ENCODE measurements at regions of chr19 and their contacts with region 1.

Region 1: GRCh38 chr19:49391581-49392399 is 3.7 kb downstream of the KASH5 start:
- DNase-seq: peak; percentile 89 to 93
- ATAC-seq: peak; percentile 83 to 94
- H3K4me3 ChIP-seq: no peak overlapping the region
- H3K27ac ChIP-seq: no peak overlapping the region
- H3K4me1 ChIP-seq: 0 out of 3 replicates have a peak, but pooled peaks cover 3% of the 10 kb centered on the region
- CTCF ChIP-seq: peak; percentile 98
- EP300 ChIP-seq: no peak
- POLR2A ChIP-seq: no peak
- RAD21 ChIP-seq: peak; percentile 97 to 99

Region 2: GRCh38 chr19:49294401-49294800 is 97.4 kb before region 1 on chr19:
- CTCF ChIA-PET with region 1: no interaction called
- POLR2A ChIA-PET with region 1: no interaction called
- DNase-seq: no peak
- ATAC-seq: no peak
- H3K4me3 ChIP-seq: no peak overlapping the region
- H3K27ac ChIP-seq: no peak overlapping the region
- H3K4me1 ChIP-seq: no peaks in the 10 kb centered on the region
- CTCF ChIP-seq: no peak
- EP300 ChIP-seq: no peak
- POLR2A ChIP-seq: no peak
- RAD21 ChIP-seq: no peak

Region 3: DNA sequence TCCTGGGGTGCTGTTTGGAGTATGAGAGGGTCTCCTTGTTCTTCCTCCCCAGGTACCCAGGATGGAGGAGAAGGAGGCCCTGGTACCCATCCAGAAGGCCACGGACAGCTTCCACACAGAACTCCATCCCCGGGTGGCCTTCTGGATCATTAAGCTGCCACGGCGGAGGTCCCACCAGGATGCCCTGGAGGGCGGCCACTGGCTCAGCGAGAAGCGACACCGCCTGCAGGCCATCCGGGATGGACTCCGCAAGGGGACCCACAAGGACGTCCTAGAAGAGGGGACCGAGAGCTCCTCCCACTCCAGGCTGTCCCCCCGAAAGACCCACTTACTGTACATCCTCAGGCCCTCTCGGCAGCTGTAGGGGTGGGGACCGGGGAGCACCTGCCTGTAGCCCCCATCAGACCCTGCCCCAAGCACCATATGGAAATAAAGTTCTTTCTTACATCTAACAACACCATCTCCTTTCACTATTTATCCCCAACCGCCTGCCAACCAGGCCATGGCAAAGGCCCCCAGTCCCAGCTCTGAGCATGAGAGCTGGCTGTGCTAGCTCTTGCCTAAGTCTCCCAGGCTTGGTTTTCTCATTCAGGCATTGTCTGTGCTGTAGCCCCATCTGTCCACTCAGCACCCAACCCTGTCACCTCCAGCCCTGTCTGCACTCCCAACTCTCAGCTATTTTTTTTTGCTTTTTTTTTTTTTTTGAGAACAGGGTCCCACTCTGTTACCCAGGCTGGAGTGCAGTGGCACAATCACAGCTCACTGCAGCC is 16.9 kb before region 1 on chr19:
- CTCF ChIA-PET with region 1: interaction called, 108 read pairs
- POLR2A ChIA-PET with region 1: interaction called, 3 read pairs
- DNase-seq: no peak
- ATAC-seq: peak; percentile 32 to 40; a peak in 3 of 6 replicates
- H3K4me3 ChIP-seq: no peak overlapping the region
- H3K27ac ChIP-seq: no peak overlapping the region
- H3K4me1 ChIP-seq: no peaks in the 10 kb centered on the region
- CTCF ChIP-seq: no peak
- EP300 ChIP-seq: no peak
- POLR2A ChIP-seq: no peak
- RAD21 ChIP-seq: no peak

Region 4: DNA sequence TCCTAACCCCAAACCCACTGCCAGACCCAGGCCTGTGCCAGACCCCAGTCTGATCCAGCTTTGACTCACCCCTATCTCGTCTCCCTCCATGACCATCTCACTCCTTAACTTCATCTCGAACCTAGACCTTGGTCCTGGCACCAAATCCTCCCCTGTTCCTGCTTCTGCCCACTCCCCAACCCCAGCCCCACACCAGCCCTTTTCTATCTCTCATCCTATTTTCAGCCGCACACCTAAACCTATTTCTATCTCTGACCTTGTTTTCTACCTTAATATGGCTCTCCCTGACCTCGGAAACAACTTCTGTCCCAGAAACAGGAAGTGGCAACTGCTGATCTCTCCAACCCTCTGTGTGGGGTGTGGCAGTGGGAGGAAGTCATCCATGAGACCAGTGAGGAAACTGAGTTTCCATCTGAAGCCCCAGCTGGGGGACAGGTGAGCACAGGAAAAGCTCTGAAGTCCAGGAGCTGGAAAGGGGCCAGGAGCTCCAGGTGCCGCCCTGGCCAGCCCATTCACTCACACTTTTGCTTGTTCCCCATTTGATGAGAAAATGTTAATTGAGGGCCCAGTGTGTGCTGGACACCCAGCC is 17.7 kb after region 1 on chr19:
- CTCF ChIA-PET with region 1: interaction called, 68 read pairs
- POLR2A ChIA-PET with region 1: no interaction called
- DNase-seq: no peak
- ATAC-seq: no peak
- H3K4me3 ChIP-seq: no peak overlapping the region
- H3K27ac ChIP-seq: no peak overlapping the region
- H3K4me1 ChIP-seq: no peaks in the 10 kb centered on the region
- CTCF ChIP-seq: no peak
- EP300 ChIP-seq: no peak
- POLR2A ChIP-seq: no peak
- RAD21 ChIP-seq: no peak

Region 5: GRCh38 chr19:49430678-49431329 is 39.0 kb after region 1 on chr19:
- CTCF ChIA-PET with region 1: interaction called, 141 read pairs
- POLR2A ChIA-PET with region 1: no interaction called
- DNase-seq: peak in 1 of 2 experiments; percentile 68
- ATAC-seq: peak in 1 of 2 experiments; percentile 43; a peak in 3 of 6 replicates
- H3K4me3 ChIP-seq: no peak overlapping the region
- H3K27ac ChIP-seq: no peak overlapping the region
- H3K4me1 ChIP-seq: peaks cover 20% of the 10 kb centered on the region
- CTCF ChIP-seq: peak; percentile 46
- EP300 ChIP-seq: no peak
- POLR2A ChIP-seq: no peak
- RAD21 ChIP-seq: peak; percentile 12 to 27; a peak in 2 of 5 replicates

Region 6: GRCh38 chr19:49443366-49444099 is 51.7 kb after region 1 on chr19:
- CTCF ChIA-PET with region 1: interaction called, 244 read pairs
- POLR2A ChIA-PET with region 1: interaction called, 4 read pairs
- DNase-seq: peak; percentile 94 to 97
- ATAC-seq: peak; percentile 72 to 85
- H3K4me3 ChIP-seq: peak overlapping the region; percentile 79
- H3K27ac ChIP-seq: peak overlapping the region; percentile 85 to 89
- H3K4me1 ChIP-seq: peaks cover 19% of the 10 kb centered on the region
- CTCF ChIP-seq: peak; percentile 97
- EP300 ChIP-seq: no peak
- POLR2A ChIP-seq: peak; percentile 21; the same call in 1 of the 2 replicates
- RAD21 ChIP-seq: peak; percentile 64 to 82

Region 7: GRCh38 chr19:49546825-49547565 is 155.2 kb after region 1 on chr19:
- CTCF ChIA-PET with region 1: interaction called, 13 read pairs
- POLR2A ChIA-PET with region 1: no interaction called
- DNase-seq: peak; percentile 91 to 94
- ATAC-seq: peak; percentile 88 to 89
- H3K4me3 ChIP-seq: peak overlapping the region; percentile 23; the same call in 1 of the 3 replicates
- H3K27ac ChIP-seq: peak overlapping the region in 1 of 2 experiments; percentile 29; a peak in 3 of 6 replicates
- H3K4me1 ChIP-seq: 0 out of 3 replicates have a peak, but pooled peaks cover 3% of the 10 kb centered on the region
- CTCF ChIP-seq: peak; percentile 97
- EP300 ChIP-seq: no peak
- POLR2A ChIP-seq: no peak
- RAD21 ChIP-seq: peak; percentile 94 to 98

Measured in A549 (cell line).